ENCODE measurements at regions of chr9 and their contacts with region 1.

Region 1: GRCh38 chr9:37769306-37769705 is 15.6 kb downstream of the EXOSC3 start:
- DNase-seq: no peak
- ATAC-seq: no peak
- H3K4me3 ChIP-seq: no peak overlapping the region
- H3K4me3 Mint-ChIP-seq: no peak overlapping the region
- H3K27ac ChIP-seq: no peak overlapping the region
- H3K27ac Mint-ChIP-seq: peak overlapping the region; percentile 61
- H3K4me1 ChIP-seq: no peaks in the 10 kb centered on the region
- H3K4me1 Mint-ChIP-seq: peaks cover 12% of the 10 kb centered on the region
- H3K27me3 ChIP-seq: no peaks in the 10 kb centered on the region
- H3K27me3 Mint-ChIP-seq: no peaks in the 10 kb centered on the region
- CTCF ChIP-seq: no peak

Region 2: DNA sequence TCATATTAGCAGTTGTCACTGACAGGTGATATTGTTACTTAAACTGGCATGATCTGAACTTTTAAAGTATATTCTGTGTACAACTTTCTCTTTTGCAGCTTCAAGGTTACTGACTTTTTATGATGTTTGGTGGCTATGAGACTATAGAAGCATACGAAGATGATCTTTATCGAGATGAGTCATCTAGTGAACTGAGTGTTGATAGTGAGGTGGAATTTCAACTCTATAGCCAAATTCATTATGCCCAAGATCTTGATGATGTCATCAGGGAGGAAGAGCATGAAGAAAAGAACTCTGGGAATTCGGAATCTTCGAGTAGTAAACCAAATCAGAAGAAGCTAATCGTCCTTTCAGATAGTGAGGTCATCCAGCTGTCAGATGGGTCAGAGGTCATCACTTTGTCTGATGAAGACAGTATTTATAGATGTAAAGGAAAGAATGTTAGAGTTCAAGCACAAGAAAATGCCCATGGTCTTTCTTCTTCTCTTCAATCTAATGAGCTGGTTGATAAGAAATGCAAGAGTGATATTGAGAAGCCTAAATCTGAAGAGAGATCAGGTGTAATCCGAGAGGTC is 643.0 kb before region 1 on chr9:
- CTCF ChIA-PET with region 1: no interaction called
- POLR2A ChIA-PET with region 1: no interaction called
- intact Hi-C with region 1: loop called in 1 of 2 experiments (anchors 5 kb)
- DNase-seq: no peak
- ATAC-seq: no peak
- H3K4me3 ChIP-seq: no peak overlapping the region
- H3K4me3 Mint-ChIP-seq: no peak overlapping the region
- H3K27ac ChIP-seq: no peak overlapping the region
- H3K27ac Mint-ChIP-seq: no peak overlapping the region
- H3K4me1 ChIP-seq: peaks cover 29% of the 10 kb centered on the region
- H3K4me1 Mint-ChIP-seq: peaks cover 33% of the 10 kb centered on the region
- H3K27me3 ChIP-seq: no peaks in the 10 kb centered on the region
- H3K27me3 Mint-ChIP-seq: no peaks in the 10 kb centered on the region
- CTCF ChIP-seq: no peak

Region 3: DNA sequence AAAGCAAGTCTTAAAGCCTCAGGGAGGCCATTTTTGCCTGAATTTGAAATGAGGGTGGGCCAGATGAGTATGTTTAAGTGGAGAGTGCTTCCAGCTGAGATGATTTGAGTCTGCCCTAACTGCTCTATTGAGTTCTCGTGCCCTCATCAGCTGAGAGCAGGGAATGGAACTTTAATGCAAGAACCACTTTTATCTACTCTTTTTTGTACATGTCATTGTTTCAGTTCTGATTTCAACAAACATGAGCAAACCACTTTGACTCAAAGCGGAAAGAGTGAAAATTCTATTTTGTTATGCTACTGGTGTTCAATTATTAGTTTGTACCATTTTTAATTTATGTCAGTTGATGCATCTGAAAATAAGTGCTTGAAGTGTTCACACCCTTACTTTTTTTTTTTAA is 67.1 kb after region 1 on chr9:
- CTCF ChIA-PET with region 1: no interaction called
- POLR2A ChIA-PET with region 1: no interaction called
- intact Hi-C with region 1: no loop called
- DNase-seq: no peak
- ATAC-seq: no peak
- H3K4me3 ChIP-seq: no peak overlapping the region
- H3K4me3 Mint-ChIP-seq: no peak overlapping the region
- H3K27ac ChIP-seq: no peak overlapping the region
- H3K27ac Mint-ChIP-seq: no peak overlapping the region
- H3K4me1 ChIP-seq: no peaks in the 10 kb centered on the region
- H3K4me1 Mint-ChIP-seq: peaks cover 3% of the 10 kb centered on the region
- H3K27me3 ChIP-seq: no peaks in the 10 kb centered on the region
- H3K27me3 Mint-ChIP-seq: no peaks in the 10 kb centered on the region
- CTCF ChIP-seq: no peak

Region 4: GRCh38 chr9:37862530-37862929 is 93.2 kb after region 1 on chr9:
- CTCF ChIA-PET with region 1: no interaction called
- POLR2A ChIA-PET with region 1: no interaction called
- intact Hi-C with region 1: no loop called
- DNase-seq: no peak
- ATAC-seq: no peak
- H3K4me3 ChIP-seq: no peak overlapping the region
- H3K4me3 Mint-ChIP-seq: no peak overlapping the region
- H3K27ac ChIP-seq: no peak overlapping the region
- H3K27ac Mint-ChIP-seq: no peak overlapping the region
- H3K4me1 ChIP-seq: no peaks in the 10 kb centered on the region
- H3K4me1 Mint-ChIP-seq: no peaks in the 10 kb centered on the region
- H3K27me3 ChIP-seq: no peaks in the 10 kb centered on the region
- H3K27me3 Mint-ChIP-seq: no peaks in the 10 kb centered on the region
- CTCF ChIP-seq: no peak